Panc1 (cell line): ENCODE measurements at regions of chrX and their contacts with region 1.

Region 1: DNA sequence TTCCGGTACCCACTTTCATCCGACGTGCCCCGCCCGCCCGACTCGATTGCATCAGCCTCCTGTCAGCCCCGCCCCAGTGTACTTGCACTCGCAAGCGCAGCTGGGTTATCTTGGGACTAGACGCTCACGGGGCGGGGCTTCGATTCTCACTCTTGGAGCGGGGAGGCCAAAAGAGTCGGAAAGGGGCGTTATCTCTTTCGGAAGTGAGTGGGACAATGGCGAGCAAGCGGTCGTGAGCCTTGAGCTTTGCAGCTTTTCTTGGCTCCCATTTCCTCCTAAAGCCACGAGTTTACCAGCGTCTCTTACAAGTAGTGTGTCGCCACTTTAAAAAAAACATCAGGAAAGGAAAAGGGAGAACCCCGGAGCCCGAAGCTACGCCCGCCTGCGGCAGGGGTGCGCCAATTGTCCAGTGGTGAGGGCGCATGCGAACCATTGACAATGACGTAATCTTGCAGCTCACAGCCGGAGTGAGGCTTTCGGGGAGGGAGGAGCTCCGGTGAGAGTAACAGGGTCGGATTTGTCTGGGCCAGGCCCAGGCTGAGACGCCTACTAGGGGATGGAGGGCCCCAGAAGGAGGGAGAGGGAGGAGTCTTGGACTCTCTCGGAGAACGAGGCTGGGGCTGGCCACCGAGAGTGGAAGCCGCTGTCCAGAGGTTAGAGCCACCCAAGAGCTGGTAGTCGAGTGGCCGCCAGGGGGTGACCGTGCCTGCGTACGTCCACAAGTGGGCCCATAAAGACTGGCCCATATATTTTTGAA is 109.5 kb downstream of the GNL3L start:
- DNase-seq: peak; percentile 88
- ATAC-seq: peak; percentile 99
- H3K4me3 ChIP-seq: peak overlapping the region; percentile 57 to 65
- H3K27ac ChIP-seq: peak overlapping the region; percentile 97
- H3K4me1 ChIP-seq: peaks cover 4% of the 10 kb centered on the region; the same call in 1 of the 2 replicates
- H3K27me3 ChIP-seq: no peaks in the 10 kb centered on the region
- CTCF ChIP-seq: peak; percentile 82

Region 2: GRCh38 chrX:54786962-54787361 is 147.4 kb after region 1 on chrX:
- CTCF ChIA-PET with region 1: no interaction called
- POLR2A ChIA-PET with region 1: no interaction called
- in situ Hi-C with region 1: no loop called
- intact Hi-C with region 1: loop called (anchors 10 kb)
- DNase-seq: no peak
- ATAC-seq: no peak
- H3K4me3 ChIP-seq: no peak overlapping the region
- H3K27ac ChIP-seq: no peak overlapping the region
- H3K4me1 ChIP-seq: no peaks in the 10 kb centered on the region
- H3K27me3 ChIP-seq: no peaks in the 10 kb centered on the region
- CTCF ChIP-seq: peak; percentile 32

Region 3: DNA sequence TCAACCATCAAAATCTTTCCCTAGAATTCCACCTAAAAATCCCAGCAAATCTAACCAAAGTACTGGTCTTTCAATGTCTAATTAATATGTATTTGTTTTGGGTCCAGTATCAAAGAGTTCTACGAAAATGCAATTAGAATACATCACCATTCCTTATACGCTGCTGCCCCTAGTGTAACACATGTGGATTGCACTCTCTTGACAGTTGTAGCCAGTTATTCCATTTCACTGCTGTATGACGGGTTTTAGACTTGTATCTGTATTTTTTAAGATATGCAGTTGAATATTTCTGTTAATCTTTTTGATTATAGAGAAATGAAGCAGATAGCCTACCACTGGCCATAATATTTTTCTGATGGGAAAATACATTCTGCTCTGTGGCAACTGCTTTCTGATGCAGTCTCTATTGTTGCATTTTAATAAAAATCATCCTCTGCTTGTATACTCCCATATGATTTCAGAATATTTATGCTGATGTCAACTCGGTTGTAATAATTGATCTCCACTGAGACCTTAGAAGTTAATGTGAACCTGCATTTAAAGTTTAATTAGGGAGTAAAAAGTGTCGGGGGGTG is 418.2 kb after region 1 on chrX:
- CTCF ChIA-PET with region 1: no interaction called
- POLR2A ChIA-PET with region 1: no interaction called
- in situ Hi-C with region 1: no loop called
- intact Hi-C with region 1: loop called (anchors 10 kb)
- DNase-seq: peak; percentile 20
- ATAC-seq: peak; percentile 72; the same call in 1 of the 2 replicates
- H3K4me3 ChIP-seq: no peak overlapping the region
- H3K27ac ChIP-seq: no peak overlapping the region
- H3K4me1 ChIP-seq: no peaks in the 10 kb centered on the region
- H3K27me3 ChIP-seq: no peaks in the 10 kb centered on the region; the same call in 1 of the 2 replicates
- CTCF ChIP-seq: peak; percentile 75; the same call in 1 of the 2 replicates

Region 4: GRCh38 chrX:55326985-55327384 is 687.5 kb after region 1 on chrX:
- CTCF ChIA-PET with region 1: no interaction called
- POLR2A ChIA-PET with region 1: no interaction called
- in situ Hi-C with region 1: no loop called
- intact Hi-C with region 1: no loop called
- DNase-seq: no peak
- ATAC-seq: no peak
- H3K4me3 ChIP-seq: no peak overlapping the region
- H3K27ac ChIP-seq: no peak overlapping the region
- H3K4me1 ChIP-seq: no peaks in the 10 kb centered on the region
- H3K27me3 ChIP-seq: no peaks in the 10 kb centered on the region
- CTCF ChIP-seq: no peak

Region 5: GRCh38 chrX:55758033-55758432 is 1118.5 kb after region 1 on chrX:
- CTCF ChIA-PET with region 1: no interaction called
- POLR2A ChIA-PET with region 1: no interaction called
- in situ Hi-C with region 1: no loop called
- intact Hi-C with region 1: no loop called
- DNase-seq: no peak
- ATAC-seq: no peak
- H3K4me3 ChIP-seq: no peak overlapping the region
- H3K27ac ChIP-seq: no peak overlapping the region
- H3K4me1 ChIP-seq: no peaks in the 10 kb centered on the region
- H3K27me3 ChIP-seq: no peaks in the 10 kb centered on the region
- CTCF ChIP-seq: no peak